Heart left ventricle (tissue), 16 donors: ENCODE measurements at regions of chr14 and their contacts with region 1.

Region 1: GRCh38 chr14:32939254-32940065 is 781 bp downstream of the NPAS3 start:
- DNase-seq: peak; percentile 82 to 87 (median 84)
- ATAC-seq: peak; percentile 73 to 96 (median 92)
- H3K4me3 ChIP-seq: peak overlapping the region; percentile 25 to 69 (median 60)
- H3K27ac ChIP-seq: peak overlapping the region; percentile 55 to 88 (median 74)
- H3K4me1 ChIP-seq: peaks cover 0 to 23% (median 8%) of the 10 kb centered on the region in 12 donors
- H3K27me3 ChIP-seq: peaks cover 8 to 47% (median 30%) of the 10 kb centered on the region in 9 donors
- CTCF ChIP-seq: no peak
- POLR2A ChIP-seq: no peak

Region 2: DNA sequence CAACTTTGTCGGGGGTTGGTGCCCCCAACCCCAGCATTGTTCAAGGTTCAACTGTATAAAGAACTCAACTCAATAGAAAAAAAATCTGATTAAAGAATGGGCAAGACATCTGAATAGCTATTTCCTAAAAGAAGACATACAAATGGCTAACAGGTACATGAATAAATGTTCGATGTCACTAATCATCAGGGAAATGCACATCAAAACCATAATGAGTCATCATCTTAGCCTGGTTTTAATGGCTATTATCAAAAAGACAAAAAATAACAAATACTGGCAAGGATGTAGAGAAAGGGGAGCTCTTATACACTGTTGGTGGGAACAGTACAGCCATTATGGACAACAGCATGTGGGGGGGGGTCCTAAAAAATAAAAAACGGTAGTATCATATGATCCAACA is 28.0 kb after region 1 on chr14:
- intact Hi-C with region 1: no loop called
- DNase-seq: no peak
- ATAC-seq: no peak
- H3K4me3 ChIP-seq: no peak overlapping the region
- H3K27ac ChIP-seq: no peak overlapping the region
- H3K4me1 ChIP-seq: no peaks in the 10 kb centered on the region
- H3K27me3 ChIP-seq: no peaks in the 10 kb centered on the region
- CTCF ChIP-seq: no peak
- POLR2A ChIP-seq: no peak

Region 3: GRCh38 chr14:33432407-33433023 is 493.1 kb after region 1 on chr14:
- intact Hi-C with region 1: loop called in 1 of 10 experiments (anchors 10 kb)
- DNase-seq: no peak
- ATAC-seq: no peak
- H3K4me3 ChIP-seq: no peak overlapping the region
- H3K27ac ChIP-seq: no peak overlapping the region
- H3K4me1 ChIP-seq: peaks cover 0 to 12% (median 0%) of the 10 kb centered on the region in 12 donors
- H3K27me3 ChIP-seq: no peaks in the 10 kb centered on the region
- CTCF ChIP-seq: peak in 11 of 12 donors; percentile 19 to 56 (median 39)
- POLR2A ChIP-seq: no peak